ENCODE measurements at regions of chr1 and their contacts with region 1.

Region 1: DNA sequence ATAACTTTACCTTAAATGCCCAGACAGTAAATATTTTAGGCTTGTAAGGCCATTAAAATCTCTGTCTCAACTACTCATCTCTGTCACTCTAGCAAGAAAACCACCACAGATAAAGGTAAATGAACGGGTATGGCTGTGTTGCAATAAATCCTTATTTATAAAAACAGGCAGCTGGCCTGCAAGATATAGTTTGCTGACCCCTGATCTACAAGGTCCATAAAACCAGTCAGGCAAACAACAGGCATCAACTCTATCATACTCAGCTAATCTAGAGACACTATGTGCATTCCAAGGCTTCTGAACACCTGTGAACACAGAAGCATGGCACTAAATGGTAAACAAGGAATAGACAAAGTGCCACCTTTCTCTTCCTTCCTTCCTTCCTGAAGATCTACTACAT is 9.7 kb downstream of the FAF1 start:
- DNase-seq: no peak
- H3K4me3 ChIP-seq: no peak overlapping the region
- H3K27ac ChIP-seq: no peak overlapping the region
- H3K4me1 ChIP-seq: no peaks in the 10 kb centered on the region
- H3K27me3 ChIP-seq: no peaks in the 10 kb centered on the region
- CTCF ChIP-seq: no peak
- POLR2A ChIP-seq: no peak

Region 2: GRCh38 chr1:50901872-50902271 is 48.5 kb before region 1 on chr1:
- intact Hi-C with region 1: loop called (anchors 2 kb)
- DNase-seq: no peak
- H3K4me3 ChIP-seq: no peak overlapping the region
- H3K27ac ChIP-seq: no peak overlapping the region
- H3K4me1 ChIP-seq: no peaks in the 10 kb centered on the region
- H3K27me3 ChIP-seq: no peaks in the 10 kb centered on the region
- CTCF ChIP-seq: no peak
- POLR2A ChIP-seq: no peak

Measured in vagina (tissue), 2 donors.